ENCODE measurements at regions of chr5 and their contacts with region 1.

Region 1: GRCh38 chr5:148364343-148364742 is 19.4 kb upstream of the FBXO38 start:
- DNase-seq: no peak
- CTCF ChIP-seq: no peak

Region 2: DNA sequence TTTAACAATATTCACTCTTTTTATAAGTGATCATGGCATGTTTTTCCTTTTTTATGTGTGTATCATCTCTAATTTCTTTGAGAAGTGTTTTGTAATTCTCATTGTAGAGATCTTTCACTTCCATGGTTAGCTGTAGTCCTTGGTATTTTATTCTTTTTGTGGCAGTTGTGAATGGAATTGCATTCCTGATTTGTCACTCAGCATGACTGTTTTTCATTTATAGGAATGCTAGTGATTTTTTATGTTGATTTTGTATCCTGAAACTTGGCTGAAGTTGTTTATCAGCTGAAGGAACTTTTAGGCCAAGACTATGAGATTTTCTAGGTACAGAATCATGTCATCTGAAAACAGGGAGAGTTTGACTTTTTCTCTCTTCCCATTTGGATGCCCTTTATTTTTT is 108.9 kb before region 1 on chr5:
- CTCF ChIA-PET with region 1: no interaction called
- POLR2A ChIA-PET with region 1: no interaction called
- DNase-seq: no peak
- CTCF ChIP-seq: no peak

Region 3: GRCh38 chr5:148374692-148375360 is 10.5 kb after region 1 on chr5:
- CTCF ChIA-PET with region 1: interaction called, 10 read pairs
- POLR2A ChIA-PET with region 1: no interaction called
- DNase-seq: peak; percentile 13
- CTCF ChIP-seq: peak; percentile 59

Region 4: GRCh38 chr5:148788636-148789035 is 424.3 kb after region 1 on chr5:
- CTCF ChIA-PET with region 1: no interaction called
- POLR2A ChIA-PET with region 1: no interaction called
- DNase-seq: no peak
- CTCF ChIP-seq: no peak